Dendritic cell treated with granulocyte-macrophage colony-stimulating factor and Interleukin-4, amounts not matched to agents 40 ng/mL and 50 ng/mL, for 4 days (primary cell): ENCODE measurements at regions of chr5 and their contacts with region 1.

Region 1: GRCh38 chr5:139633295-139634027 is 14.7 kb upstream of the CXXC5 start:
- H3K4me3 Mint-ChIP-seq: no peak overlapping the region
- H3K27ac Mint-ChIP-seq: no peak overlapping the region
- H3K4me1 Mint-ChIP-seq: peaks cover 52% of the 10 kb centered on the region
- H3K27me3 Mint-ChIP-seq: no peaks in the 10 kb centered on the region

Region 2: DNA sequence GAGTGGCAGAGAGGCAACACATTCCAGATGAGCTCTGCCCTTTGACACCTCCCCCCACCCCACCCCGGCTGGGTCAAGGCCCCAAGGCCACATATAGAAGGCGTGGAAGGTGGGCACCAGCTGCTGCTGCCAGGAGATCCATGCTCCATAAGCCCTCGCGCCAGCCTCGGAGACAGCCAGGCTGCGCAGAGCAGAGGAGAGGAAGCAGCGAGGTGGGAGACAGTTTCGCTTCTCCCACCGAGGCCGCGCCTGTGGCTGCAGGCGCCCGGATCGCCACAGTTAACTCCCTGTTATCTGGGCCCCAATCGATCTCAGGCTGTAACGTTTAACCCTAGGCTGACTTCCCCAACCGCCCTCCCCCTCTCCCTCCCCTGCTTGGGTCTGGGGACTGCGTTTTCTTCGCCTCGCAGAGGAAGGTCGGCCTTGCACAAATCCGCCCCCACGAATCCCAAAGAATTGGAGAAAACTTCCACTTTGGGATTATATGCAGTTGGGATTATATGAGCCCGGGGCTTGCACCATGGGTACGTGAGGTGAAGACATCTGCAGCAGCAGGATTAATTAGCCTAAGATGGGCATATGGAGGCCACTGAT is 13.5 kb after region 1 on chr5:
- intact Hi-C with region 1: loop called (anchors 1 kb)
- H3K4me3 Mint-ChIP-seq: peak overlapping the region; percentile 86
- H3K27ac Mint-ChIP-seq: peak overlapping the region; percentile 50
- H3K4me1 Mint-ChIP-seq: peaks cover 77% of the 10 kb centered on the region
- H3K27me3 Mint-ChIP-seq: peaks cover 41% of the 10 kb centered on the region

Region 3: GRCh38 chr5:139651853-139652787 is 18.7 kb after region 1 on chr5:
- intact Hi-C with region 1: loop called (anchors 1 kb)
- H3K4me3 Mint-ChIP-seq: peak overlapping the region; percentile 64
- H3K27ac Mint-ChIP-seq: peak overlapping the region; percentile 51
- H3K4me1 Mint-ChIP-seq: peaks cover 79% of the 10 kb centered on the region
- H3K27me3 Mint-ChIP-seq: peaks cover 21% of the 10 kb centered on the region

Region 4: DNA sequence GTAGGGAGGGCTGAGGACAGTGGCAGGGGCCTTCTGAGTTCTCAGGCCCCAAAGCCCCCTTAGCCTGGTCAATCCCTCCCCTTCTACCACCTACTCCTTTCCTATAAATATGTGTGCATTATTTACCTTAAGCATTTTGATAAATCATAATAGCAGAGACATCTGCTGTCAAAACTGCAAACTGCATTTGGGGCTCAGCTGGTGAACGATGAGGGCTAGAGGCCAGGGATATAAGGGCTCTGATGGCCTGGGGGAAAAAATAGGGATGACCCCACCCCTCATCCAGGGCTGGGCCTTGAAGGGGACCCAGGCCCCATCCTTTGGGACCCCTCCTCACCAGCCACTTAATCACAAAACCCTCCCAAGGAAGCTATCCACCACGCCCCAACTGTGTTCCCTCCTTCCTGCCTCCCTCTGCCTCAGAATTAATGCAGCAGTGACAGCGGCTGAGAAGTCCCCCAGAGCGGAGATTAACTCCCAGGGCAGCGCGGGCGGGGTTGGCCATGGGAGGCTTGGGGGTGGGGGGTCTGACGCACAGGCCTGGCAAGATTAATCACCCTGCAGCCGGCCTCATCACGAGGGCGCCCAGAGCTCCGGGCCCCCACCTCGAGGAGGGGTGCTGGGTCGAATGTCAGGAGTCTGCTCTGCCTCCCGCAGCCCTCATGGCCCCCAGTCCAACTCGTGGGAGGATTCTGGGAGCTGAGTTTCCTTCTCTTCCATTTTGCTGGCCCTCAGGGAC is 56.8 kb after region 1 on chr5:
- intact Hi-C with region 1: loop called (anchors 1 kb)
- H3K4me3 Mint-ChIP-seq: no peak overlapping the region
- H3K27ac Mint-ChIP-seq: no peak overlapping the region
- H3K4me1 Mint-ChIP-seq: peaks cover 58% of the 10 kb centered on the region
- H3K27me3 Mint-ChIP-seq: peaks cover 36% of the 10 kb centered on the region

Region 5: GRCh38 chr5:139711067-139711905 is 77.8 kb after region 1 on chr5:
- intact Hi-C with region 1: no loop called
- H3K4me3 Mint-ChIP-seq: peak overlapping the region; percentile 77
- H3K27ac Mint-ChIP-seq: peak overlapping the region; percentile 68
- H3K4me1 Mint-ChIP-seq: peaks cover 41% of the 10 kb centered on the region
- H3K27me3 Mint-ChIP-seq: peaks cover 69% of the 10 kb centered on the region

Region 6: DNA sequence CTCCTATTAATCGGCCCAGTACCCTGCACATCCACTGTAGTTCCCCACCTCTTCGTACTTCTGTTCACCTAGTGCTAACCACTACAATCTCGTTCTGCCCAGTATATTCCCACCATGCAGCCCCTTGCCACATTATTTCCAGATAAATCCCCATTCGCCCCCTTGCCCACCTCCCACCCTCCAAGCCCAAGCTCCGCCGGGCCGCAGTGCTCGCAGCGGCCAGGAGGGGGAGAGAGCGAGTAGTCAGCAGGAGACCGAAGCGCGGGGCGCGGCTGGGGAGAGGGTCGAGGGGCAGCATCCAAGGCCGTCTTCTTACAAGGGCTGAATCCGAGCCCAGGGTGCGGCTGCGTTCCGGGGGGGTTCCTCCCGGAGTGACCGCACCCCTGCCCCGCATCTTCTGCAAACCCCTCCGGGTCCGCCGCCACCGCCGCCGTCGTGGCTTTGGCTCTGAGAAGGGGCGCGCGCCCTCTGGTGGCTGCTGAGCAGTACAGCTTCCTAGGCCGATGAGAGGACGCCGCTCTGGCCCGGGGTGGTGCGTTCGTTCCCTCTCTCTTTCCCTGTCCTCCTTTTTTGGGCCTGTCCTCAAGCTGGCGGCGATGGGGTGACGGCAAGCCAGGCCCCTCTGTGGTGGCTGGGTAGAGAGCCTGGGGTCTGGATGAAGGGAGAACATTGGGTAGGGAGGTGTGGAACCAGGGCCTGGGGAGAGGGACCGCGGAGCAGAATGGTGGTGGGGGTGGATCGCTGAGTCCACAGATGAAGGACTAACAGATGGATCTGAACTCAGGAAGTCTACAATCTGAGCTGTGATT is 132.2 kb after region 1 on chr5:
- intact Hi-C with region 1: loop called (anchors 1 kb)
- H3K4me3 Mint-ChIP-seq: peak overlapping the region; percentile 69
- H3K27ac Mint-ChIP-seq: peak overlapping the region; percentile 51
- H3K4me1 Mint-ChIP-seq: peaks cover 17% of the 10 kb centered on the region
- H3K27me3 Mint-ChIP-seq: peaks cover 61% of the 10 kb centered on the region

Region 7: DNA sequence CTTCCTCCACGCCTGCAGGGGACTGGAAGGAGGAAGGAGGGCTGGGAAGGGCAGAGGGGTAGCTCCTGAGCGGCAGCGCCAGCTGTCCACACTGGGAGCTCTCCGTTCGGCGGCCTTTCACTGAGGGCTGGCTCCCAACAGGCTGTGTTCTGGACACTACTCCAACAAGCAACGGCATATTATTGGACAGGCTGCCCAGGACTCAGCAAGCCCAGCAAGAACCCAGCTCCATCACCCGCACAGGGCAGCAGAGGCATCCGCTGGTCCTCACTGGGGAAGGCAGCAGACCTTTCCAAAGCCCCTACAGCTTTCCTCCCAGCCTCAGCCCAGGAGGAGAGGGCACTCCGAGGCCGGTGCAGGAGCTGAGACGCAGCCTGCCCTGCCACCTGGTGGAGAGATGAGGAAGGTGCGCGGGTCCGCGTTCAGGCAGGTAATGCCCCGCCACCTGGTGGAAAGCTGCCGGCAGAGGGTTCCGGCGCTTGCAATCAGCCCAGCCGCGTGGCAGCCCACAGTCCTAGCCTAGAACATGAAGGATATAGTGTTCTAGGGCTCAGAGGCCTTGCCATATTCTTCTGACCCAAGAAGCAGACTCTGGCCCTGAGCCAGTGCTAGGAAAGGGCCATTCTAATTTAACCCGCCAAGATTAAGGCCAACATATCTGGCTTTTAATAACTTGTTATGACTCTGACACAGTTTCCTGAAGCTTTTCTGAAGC is 335.2 kb after region 1 on chr5:
- intact Hi-C with region 1: no loop called
- H3K4me3 Mint-ChIP-seq: no peak overlapping the region
- H3K27ac Mint-ChIP-seq: no peak overlapping the region
- H3K4me1 Mint-ChIP-seq: peaks cover 5% of the 10 kb centered on the region
- H3K27me3 Mint-ChIP-seq: peaks cover 41% of the 10 kb centered on the region